Endothelial cell of umbilical vein (primary cell): ENCODE measurements at regions of chr9 and their contacts with region 1.

Region 1: GRCh38 chr9:5450359-5451091 is at the start of gene CD274:
- DNase-seq: peak; percentile 92
- H3K4me3 ChIP-seq: peak within 1 kb of the TSS; percentile 38 to 98 (median 72)
- H3K27ac ChIP-seq: peak within 1 kb of the TSS; percentile 79
- H3K4me1 ChIP-seq: peaks cover 68% of the 10 kb centered on the region
- H3K27me3 ChIP-seq: no peaks in the 10 kb centered on the region
- CTCF ChIP-seq: peak; percentile 71 to 79
- POLR2A ChIP-seq: peak; percentile 82
- total RNA-seq, gene CD274: 26.8 and 29.7 TPM in 2 replicates

Region 2: GRCh38 chr9:5488221-5489008 is 37.9 kb after region 1 on chr9:
- CTCF ChIA-PET with region 1: interaction called, 12 read pairs
- POLR2A ChIA-PET with region 1: interaction called, 6 read pairs
- dilution Hi-C with region 1: no loop called
- intact Hi-C with region 1: loop called (anchors 2 kb)
- DNase-seq: peak; percentile 88
- H3K4me3 ChIP-seq: no peak overlapping the region
- H3K27ac ChIP-seq: peak overlapping the region; percentile 74
- H3K4me1 ChIP-seq: peaks cover 33% of the 10 kb centered on the region
- H3K27me3 ChIP-seq: no peaks in the 10 kb centered on the region
- CTCF ChIP-seq: no peak
- POLR2A ChIP-seq: peak; percentile 69

Region 3: GRCh38 chr9:5499889-5500398 is 49.4 kb after region 1 on chr9:
- CTCF ChIA-PET with region 1: interaction called, 16 read pairs
- POLR2A ChIA-PET with region 1: interaction called, 10 read pairs
- dilution Hi-C with region 1: no loop called
- intact Hi-C with region 1: loop called (anchors 1 kb)
- DNase-seq: peak; percentile 97
- H3K4me3 ChIP-seq: no peak overlapping the region
- H3K27ac ChIP-seq: peak overlapping the region; percentile 89
- H3K4me1 ChIP-seq: peaks cover 33% of the 10 kb centered on the region
- H3K27me3 ChIP-seq: no peaks in the 10 kb centered on the region
- CTCF ChIP-seq: no peak
- POLR2A ChIP-seq: peak; percentile 95

Region 4: GRCh38 chr9:5518171-5518936 is 67.8 kb after region 1 on chr9:
- CTCF ChIA-PET with region 1: interaction called, 10 read pairs
- POLR2A ChIA-PET with region 1: no interaction called
- dilution Hi-C with region 1: no loop called
- intact Hi-C with region 1: no loop called
- DNase-seq: no peak
- H3K4me3 ChIP-seq: no peak overlapping the region
- H3K27ac ChIP-seq: no peak overlapping the region
- H3K4me1 ChIP-seq: no peaks in the 10 kb centered on the region
- H3K27me3 ChIP-seq: no peaks in the 10 kb centered on the region
- CTCF ChIP-seq: no peak
- POLR2A ChIP-seq: no peak

Region 5: GRCh38 chr9:5582835-5583195 is 132.3 kb after region 1 on chr9:
- CTCF ChIA-PET with region 1: interaction called, 53 read pairs
- POLR2A ChIA-PET with region 1: interaction called, 6 read pairs
- dilution Hi-C with region 1: no loop called
- intact Hi-C with region 1: no loop called
- DNase-seq: no peak
- H3K4me3 ChIP-seq: no peak overlapping the region
- H3K27ac ChIP-seq: peak overlapping the region; percentile 10
- H3K4me1 ChIP-seq: peaks cover 36% of the 10 kb centered on the region
- H3K27me3 ChIP-seq: no peaks in the 10 kb centered on the region
- CTCF ChIP-seq: no peak
- POLR2A ChIP-seq: no peak